ENCODE measurements at regions of chr19 and their contacts with region 1.

Region 1: GRCh38 chr19:48588670-48589399 is 17.7 kb upstream of the SPACA4 start:
- DNase-seq: peak; percentile 90 to 93
- ATAC-seq: peak; percentile 84 to 85
- H3K4me3 ChIP-seq: peak overlapping the region; percentile 27
- H3K27ac ChIP-seq: peak overlapping the region; percentile 58 to 85
- H3K4me1 ChIP-seq: peaks cover 9% of the 10 kb centered on the region
- CTCF ChIP-seq: peak; percentile 99
- EP300 ChIP-seq: peak in 1 of 2 experiments; percentile 31; a peak in 1 of 5 replicates
- POLR2A ChIP-seq: no peak
- RAD21 ChIP-seq: peak; percentile 78 to 87

Region 2: DNA sequence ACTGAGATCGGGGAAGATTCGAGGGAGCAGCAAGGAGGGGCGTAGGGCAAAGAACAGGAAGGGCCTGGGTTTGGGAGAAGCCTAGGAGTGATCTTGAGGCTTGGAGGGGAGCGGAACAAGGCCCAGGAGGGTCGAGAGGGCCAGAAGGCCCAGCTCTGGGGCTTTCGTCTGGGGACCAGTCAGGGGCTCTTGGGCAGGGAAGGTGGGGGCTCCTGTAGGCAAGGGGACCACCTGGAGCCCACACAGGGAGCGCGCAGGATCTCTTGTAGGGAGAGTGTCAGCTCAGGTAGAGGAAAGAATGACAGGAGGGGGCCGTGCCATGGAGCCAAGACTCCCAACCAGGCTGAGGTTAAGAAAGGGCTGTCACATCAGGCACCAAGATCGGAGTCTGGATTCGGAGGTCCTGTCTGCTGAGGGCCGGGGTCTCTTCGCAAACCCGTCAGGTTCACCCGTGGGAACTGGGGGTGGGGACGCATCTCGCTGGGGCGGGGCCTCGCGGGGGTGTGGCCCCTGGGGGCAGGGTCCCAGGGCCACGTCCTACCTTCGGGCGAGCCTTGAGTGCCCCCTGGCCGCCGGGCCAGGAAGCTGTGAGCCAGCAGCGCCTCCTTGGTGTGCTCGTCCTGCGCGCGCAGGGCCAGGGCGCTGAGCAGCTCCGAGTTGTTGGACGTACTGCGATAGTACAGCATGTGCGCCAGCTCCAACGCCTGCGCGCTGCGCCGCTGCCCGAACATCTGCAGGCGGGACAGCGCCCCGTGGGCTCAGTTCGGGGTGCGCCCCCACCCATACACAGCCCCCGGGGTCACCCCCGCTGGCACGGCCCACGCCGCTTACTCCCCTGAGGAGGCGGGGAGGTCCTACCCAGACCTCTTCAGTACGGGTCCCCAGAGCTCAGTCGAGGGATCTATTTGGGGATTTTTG is 255.1 kb before region 1 on chr19:
- CTCF ChIA-PET with region 1: interaction called, 19 read pairs
- POLR2A ChIA-PET with region 1: interaction called, 4 read pairs
- DNase-seq: peak; percentile 98 to 99
- ATAC-seq: peak; percentile 90 to 93
- H3K4me3 ChIP-seq: peak overlapping the region; percentile 52
- H3K27ac ChIP-seq: peak overlapping the region; percentile 87 to 89
- H3K4me1 ChIP-seq: peaks cover 12% of the 10 kb centered on the region; the same call in 2 of the 3 replicates
- CTCF ChIP-seq: peak; percentile 96
- EP300 ChIP-seq: no peak
- POLR2A ChIP-seq: peak; percentile 76
- RAD21 ChIP-seq: peak; percentile 92 to 99

Region 3: GRCh38 chr19:48445606-48446481 is 143.0 kb before region 1 on chr19 and contains the start of gene GRWD1:
- CTCF ChIA-PET with region 1: interaction called, 23 read pairs
- POLR2A ChIA-PET with region 1: interaction called, 4 read pairs
- DNase-seq: peak; percentile 99 to 100
- ATAC-seq: peak; percentile 91 to 92
- H3K4me3 ChIP-seq: peak within 1 kb of the TSS; percentile 81
- H3K27ac ChIP-seq: peak within 1 kb of the TSS; percentile 90 to 91
- H3K4me1 ChIP-seq: peaks cover 23% of the 10 kb centered on the region
- CTCF ChIP-seq: peak; percentile 24
- EP300 ChIP-seq: no peak
- POLR2A ChIP-seq: peak; percentile 91
- RAD21 ChIP-seq: no peak
- polyA plus RNA-seq, gene GRWD1: 40.0 and 48.1 TPM in 2 replicates

Region 4: GRCh38 chr19:48501496-48502350 is 87.1 kb before region 1 on chr19:
- CTCF ChIA-PET with region 1: interaction called, 618 read pairs
- POLR2A ChIA-PET with region 1: interaction called, 40 read pairs
- DNase-seq: peak; percentile 98 to 99
- ATAC-seq: peak; percentile 77 to 84
- H3K4me3 ChIP-seq: peak overlapping the region; percentile 45
- H3K27ac ChIP-seq: peak overlapping the region; percentile 72 to 85
- H3K4me1 ChIP-seq: peaks cover 20% of the 10 kb centered on the region
- CTCF ChIP-seq: no peak
- EP300 ChIP-seq: no peak
- POLR2A ChIP-seq: peak; percentile 17; the same call in 1 of the 2 replicates
- RAD21 ChIP-seq: no peak

Region 5: DNA sequence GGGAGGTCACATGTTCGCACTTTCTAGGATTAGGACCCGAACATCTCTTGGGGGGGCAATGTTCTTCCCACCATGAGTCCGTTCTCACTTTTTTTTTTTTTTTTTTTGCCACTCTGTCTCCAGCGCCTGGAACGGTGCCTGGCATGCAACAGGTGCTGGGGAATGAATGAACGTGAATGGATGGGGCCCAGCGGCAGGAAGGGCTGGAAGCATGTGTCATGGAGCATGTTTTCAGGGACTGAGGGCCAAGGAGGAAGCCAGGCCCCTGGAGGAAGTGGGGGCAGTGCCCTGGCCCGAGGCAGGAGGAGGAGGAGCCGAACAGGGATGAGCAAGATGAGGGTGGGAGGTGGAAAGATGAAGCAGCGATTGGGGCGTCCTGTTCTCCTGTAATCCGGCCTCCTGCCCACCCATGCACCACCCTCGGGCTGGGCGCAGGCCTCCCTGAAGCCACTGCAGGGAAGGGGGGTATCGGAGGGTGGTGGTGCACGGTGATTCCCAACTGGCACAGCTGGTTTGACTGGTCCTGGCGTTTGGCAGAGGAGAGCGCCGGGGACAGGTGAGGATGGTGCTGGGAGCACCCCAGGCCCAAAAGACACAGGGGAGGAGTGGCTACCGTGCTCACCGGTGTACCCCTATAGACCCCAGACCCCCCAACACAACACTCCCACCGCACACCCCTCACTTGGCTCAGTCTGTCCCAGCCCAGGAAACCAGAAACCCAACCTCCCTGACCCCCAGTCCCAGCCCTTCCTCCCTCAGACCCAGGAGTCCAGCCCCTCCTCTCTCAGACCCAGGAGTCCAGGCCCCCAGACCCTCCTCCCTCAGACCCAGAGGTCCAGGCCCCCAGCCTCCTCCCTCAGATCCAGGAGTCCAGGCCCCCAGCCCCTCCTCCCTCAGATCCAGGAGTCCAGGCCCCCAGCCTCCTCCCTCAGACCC is 45.4 kb before region 1 on chr19:
- CTCF ChIA-PET with region 1: interaction called, 35 read pairs
- POLR2A ChIA-PET with region 1: interaction called, 3 read pairs
- DNase-seq: peak; percentile 69 to 78
- ATAC-seq: peak; percentile 72 to 79
- H3K4me3 ChIP-seq: no peak overlapping the region
- H3K27ac ChIP-seq: peak overlapping the region; percentile 62 to 85
- H3K4me1 ChIP-seq: peaks cover 41% of the 10 kb centered on the region
- CTCF ChIP-seq: no peak
- EP300 ChIP-seq: no peak
- POLR2A ChIP-seq: no peak
- RAD21 ChIP-seq: no peak

Region 6: GRCh38 chr19:48600679-48601417 is 12.0 kb after region 1 on chr19:
- CTCF ChIA-PET with region 1: interaction called, 396 read pairs
- POLR2A ChIA-PET with region 1: interaction called, 8 read pairs
- DNase-seq: no peak
- ATAC-seq: no peak
- H3K4me3 ChIP-seq: no peak overlapping the region
- H3K27ac ChIP-seq: peak overlapping the region in 1 of 2 experiments; percentile 77; a peak in 1 of 6 replicates
- H3K4me1 ChIP-seq: peaks cover 14% of the 10 kb centered on the region
- CTCF ChIP-seq: no peak
- EP300 ChIP-seq: no peak
- POLR2A ChIP-seq: no peak
- RAD21 ChIP-seq: no peak

Region 7: GRCh38 chr19:48674921-48675824 is 86.3 kb after region 1 on chr19:
- CTCF ChIA-PET with region 1: no interaction called
- POLR2A ChIA-PET with region 1: no interaction called
- DNase-seq: peak; percentile 90 to 98
- ATAC-seq: peak; percentile 80 to 95
- H3K4me3 ChIP-seq: no peak overlapping the region
- H3K27ac ChIP-seq: peak overlapping the region; percentile 38 to 65; a peak in 5 of 6 replicates
- H3K4me1 ChIP-seq: peaks cover 5% of the 10 kb centered on the region; the same call in 1 of the 3 replicates
- CTCF ChIP-seq: peak; percentile 95
- EP300 ChIP-seq: no peak
- POLR2A ChIP-seq: no peak
- RAD21 ChIP-seq: peak; percentile 78 to 81